Activated CD4-positive, alpha-beta T cell treated with anti-CD3 and anti-CD28 coated beads for 36 hours (primary cell): ENCODE measurements at regions of chr4 and their contacts with region 1.

Region 1: DNA sequence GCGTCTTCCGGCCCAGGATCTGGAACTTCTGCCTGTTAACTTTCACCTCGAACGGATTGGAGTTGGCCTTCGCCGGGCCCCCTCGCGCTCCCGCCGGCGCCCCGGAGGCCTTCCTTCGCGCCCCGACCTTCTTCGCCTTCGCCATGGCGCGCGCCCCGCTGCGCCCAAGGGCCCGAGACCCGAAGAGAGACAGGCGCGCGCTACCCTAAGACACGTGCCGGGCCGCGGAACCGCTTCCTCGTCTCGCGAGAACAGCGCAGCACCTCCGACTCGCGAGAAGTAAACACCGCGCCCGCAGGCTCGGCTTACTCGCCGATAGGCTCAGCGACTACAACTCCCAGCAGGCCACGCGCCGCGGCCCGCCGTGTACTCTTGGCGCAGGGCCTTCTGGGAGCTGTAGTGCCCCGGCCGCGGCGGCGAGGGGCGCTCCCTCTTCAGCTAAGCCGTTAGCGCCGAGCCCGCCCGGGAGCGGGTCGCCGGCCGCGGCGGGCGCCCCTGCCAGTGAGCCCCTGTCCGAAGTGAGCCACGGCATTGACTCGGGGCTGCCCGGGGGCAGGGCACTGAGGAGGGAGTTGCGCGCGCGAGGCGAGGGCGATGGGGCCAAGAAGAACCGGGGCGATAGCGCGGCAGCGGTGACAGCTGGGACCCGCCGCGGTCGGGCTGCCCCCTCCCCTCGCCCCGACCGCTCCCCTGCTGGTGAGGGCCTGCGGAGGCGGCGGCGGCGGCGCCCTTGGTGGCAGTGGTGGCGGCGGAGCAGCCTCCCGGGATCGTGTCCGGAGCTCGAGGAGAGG is at the starts of genes GRK4 and NOP14:
- DNase-seq: peak; percentile 99
- ATAC-seq: peak; percentile 87
- H3K4me3 Mint-ChIP-seq: peak within 1 kb of the TSS; percentile 83
- H3K27ac Mint-ChIP-seq: peak within 1 kb of the TSS; percentile 86
- H3K4me1 Mint-ChIP-seq: peaks cover 34% of the 10 kb centered on the region
- H3K27me3 Mint-ChIP-seq: no peaks in the 10 kb centered on the region
- total RNA-seq, gene GRK4: 2.4 to 2.5 TPM
- total RNA-seq, gene NOP14: 86.8 to 106 TPM

Region 2: GRCh38 chr4:1346781-1347409 is 1616.5 kb before region 1 on chr4 and contains the start of gene UVSSA:
- CTCF ChIA-PET with region 1: no interaction called
- POLR2A ChIA-PET with region 1: no interaction called
- intact Hi-C with region 1: loop called in 1 of 2 experiments (anchors 5 kb)
- DNase-seq: peak; percentile 100
- ATAC-seq: peak; percentile 95
- H3K4me3 Mint-ChIP-seq: peak within 1 kb of the TSS; percentile 86
- H3K27ac Mint-ChIP-seq: peak within 1 kb of the TSS; percentile 87
- H3K4me1 Mint-ChIP-seq: peaks cover 47% of the 10 kb centered on the region
- H3K27me3 Mint-ChIP-seq: no peaks in the 10 kb centered on the region
- total RNA-seq, gene UVSSA: 14.8 to 18.1 TPM

Region 3: GRCh38 chr4:2241410-2242353 is 721.7 kb before region 1 on chr4 and contains the starts of genes HAUS3 and POLN:
- CTCF ChIA-PET with region 1: interaction called, 4 read pairs
- POLR2A ChIA-PET with region 1: no interaction called
- intact Hi-C with region 1: loop called in 1 of 2 experiments (anchors 1 kb)
- DNase-seq: peak; percentile 99
- ATAC-seq: peak; percentile 97
- H3K4me3 Mint-ChIP-seq: peak within 1 kb of the TSS; percentile 91
- H3K27ac Mint-ChIP-seq: peak within 1 kb of the TSS; percentile 88
- H3K4me1 Mint-ChIP-seq: peaks cover 54% of the 10 kb centered on the region
- H3K27me3 Mint-ChIP-seq: no peaks in the 10 kb centered on the region
- total RNA-seq, gene HAUS3: 14.6 to 18.6 TPM
- total RNA-seq, gene POLN: 2.3 to 3.2 TPM

Region 4: GRCh38 chr4:2536193-2537010 is 427.0 kb before region 1 on chr4 and contains the start of gene FAM193A:
- CTCF ChIA-PET with region 1: no interaction called
- POLR2A ChIA-PET with region 1: no interaction called
- intact Hi-C with region 1: loop called (anchors 1 to 2 kb)
- DNase-seq: peak; percentile 100
- ATAC-seq: peak; percentile 97
- H3K4me3 Mint-ChIP-seq: peak within 1 kb of the TSS; percentile 87
- H3K27ac Mint-ChIP-seq: peak within 1 kb of the TSS; percentile 88
- H3K4me1 Mint-ChIP-seq: peaks cover 24% of the 10 kb centered on the region
- H3K27me3 Mint-ChIP-seq: no peaks in the 10 kb centered on the region
- total RNA-seq, gene FAM193A: 22.1 to 30.1 TPM

Region 5: GRCh38 chr4:2843263-2843940 is 120.0 kb before region 1 on chr4 and contains the start of gene ADD1:
- CTCF ChIA-PET with region 1: no interaction called
- POLR2A ChIA-PET with region 1: interaction called, 4 read pairs
- intact Hi-C with region 1: loop called (anchors 1 to 5 kb)
- DNase-seq: peak; percentile 94
- ATAC-seq: peak; percentile 88
- H3K4me3 Mint-ChIP-seq: peak within 1 kb of the TSS; percentile 88
- H3K27ac Mint-ChIP-seq: peak within 1 kb of the TSS; percentile 89
- H3K4me1 Mint-ChIP-seq: peaks cover 56% of the 10 kb centered on the region
- H3K27me3 Mint-ChIP-seq: no peaks in the 10 kb centered on the region
- total RNA-seq, gene ADD1: 196 to 206 TPM

Region 6: GRCh38 chr4:3047464-3048286 is 84.3 kb after region 1 on chr4:
- CTCF ChIA-PET with region 1: no interaction called
- POLR2A ChIA-PET with region 1: interaction called, 3 read pairs
- intact Hi-C with region 1: loop called in 1 of 2 experiments (anchors 2 kb)
- DNase-seq: peak; percentile 89
- ATAC-seq: peak; percentile 98
- H3K4me3 Mint-ChIP-seq: peak overlapping the region; percentile 51
- H3K27ac Mint-ChIP-seq: peak overlapping the region; percentile 69
- H3K4me1 Mint-ChIP-seq: peaks cover 31% of the 10 kb centered on the region
- H3K27me3 Mint-ChIP-seq: no peaks in the 10 kb centered on the region

Region 7: DNA sequence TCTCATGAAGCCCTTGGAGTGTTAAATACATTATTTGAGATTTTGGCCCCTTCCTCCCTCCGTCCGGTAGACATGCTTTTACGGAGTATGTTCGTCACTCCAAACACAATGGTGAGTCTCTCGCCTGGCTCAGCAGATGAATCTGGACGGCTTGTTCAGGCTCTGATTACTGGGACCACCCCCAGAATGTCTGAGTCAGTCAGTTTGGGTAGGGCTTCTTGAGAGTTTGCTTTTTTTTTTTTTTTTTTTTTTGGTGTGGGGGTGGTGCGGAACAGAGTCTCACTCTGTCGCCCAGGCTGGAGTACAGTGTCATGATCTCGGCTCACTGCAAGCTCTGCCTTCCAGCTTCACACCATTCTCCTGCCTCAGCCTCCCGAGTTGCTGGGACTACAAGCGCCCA is 223.2 kb after region 1 on chr4:
- CTCF ChIA-PET with region 1: no interaction called
- POLR2A ChIA-PET with region 1: no interaction called
- intact Hi-C with region 1: no loop called
- DNase-seq: no peak
- ATAC-seq: no peak
- H3K4me3 Mint-ChIP-seq: no peak overlapping the region
- H3K27ac Mint-ChIP-seq: no peak overlapping the region
- H3K4me1 Mint-ChIP-seq: peaks cover 3% of the 10 kb centered on the region
- H3K27me3 Mint-ChIP-seq: no peaks in the 10 kb centered on the region